ENCODE measurements at regions of chr20 and their contacts with region 1.

Region 1: DNA sequence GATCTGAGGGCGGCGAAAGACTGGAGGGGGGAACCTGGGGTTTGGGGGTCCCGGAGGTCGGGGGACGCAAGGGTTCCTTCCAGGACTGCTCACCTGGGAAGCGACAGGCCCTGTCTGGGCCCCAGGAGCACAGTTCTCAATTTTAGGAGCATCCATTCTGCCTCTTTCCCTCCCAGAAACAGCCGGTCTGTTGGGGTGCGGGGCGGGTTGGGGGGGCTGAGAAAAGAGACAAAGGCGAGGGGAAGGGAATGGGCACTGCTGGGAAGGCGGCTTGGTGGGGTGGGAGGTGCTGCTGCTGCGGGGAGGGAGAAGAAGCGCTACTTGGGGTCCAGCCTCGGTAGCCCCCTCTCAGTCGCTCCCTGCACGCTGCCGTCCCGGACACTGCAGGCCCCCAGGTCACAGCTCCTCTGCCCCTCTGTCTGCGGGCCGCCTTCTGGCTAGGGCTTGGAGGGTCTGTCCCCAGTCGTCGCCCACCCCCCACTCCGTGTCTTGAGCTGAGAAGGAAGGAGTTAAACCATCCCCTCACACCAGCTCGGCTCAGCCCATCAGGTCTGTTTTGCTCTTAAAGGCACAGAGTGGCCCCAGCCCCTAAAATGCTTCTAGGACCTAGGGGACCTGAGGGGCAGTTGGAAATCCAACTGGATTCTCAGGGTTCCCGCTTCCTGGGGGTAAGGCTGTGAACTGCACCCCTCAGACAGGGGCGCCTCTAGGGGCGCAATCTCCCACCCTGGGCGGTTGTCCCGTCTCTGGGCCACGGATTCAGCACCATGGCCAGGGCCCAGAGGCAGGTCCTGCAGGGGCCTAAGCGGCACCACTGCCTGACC is 690 bp downstream of the GDAP1L1 start:
- DNase-seq: peak; percentile 63 to 96
- H3K4me3 ChIP-seq: peak overlapping the region; percentile 77 to 93 (median 84)
- H3K27ac ChIP-seq: no peak overlapping the region
- H3K4me1 ChIP-seq: peaks cover 0 to 5% (median 0%) of the 10 kb centered on the region in 4 experiments; a peak in 4 of 7 replicates
- H3K27me3 ChIP-seq: no peaks in the 10 kb centered on the region
- CTCF ChIP-seq: peak; percentile 85 to 99 (median 97)
- EP300 ChIP-seq: peak in 1 of 2 experiments; percentile 18; a peak in 1 of 3 replicates
- POLR2A ChIP-seq: no peak
- RAD21 ChIP-seq: peak; percentile 49 to 61

Region 2: DNA sequence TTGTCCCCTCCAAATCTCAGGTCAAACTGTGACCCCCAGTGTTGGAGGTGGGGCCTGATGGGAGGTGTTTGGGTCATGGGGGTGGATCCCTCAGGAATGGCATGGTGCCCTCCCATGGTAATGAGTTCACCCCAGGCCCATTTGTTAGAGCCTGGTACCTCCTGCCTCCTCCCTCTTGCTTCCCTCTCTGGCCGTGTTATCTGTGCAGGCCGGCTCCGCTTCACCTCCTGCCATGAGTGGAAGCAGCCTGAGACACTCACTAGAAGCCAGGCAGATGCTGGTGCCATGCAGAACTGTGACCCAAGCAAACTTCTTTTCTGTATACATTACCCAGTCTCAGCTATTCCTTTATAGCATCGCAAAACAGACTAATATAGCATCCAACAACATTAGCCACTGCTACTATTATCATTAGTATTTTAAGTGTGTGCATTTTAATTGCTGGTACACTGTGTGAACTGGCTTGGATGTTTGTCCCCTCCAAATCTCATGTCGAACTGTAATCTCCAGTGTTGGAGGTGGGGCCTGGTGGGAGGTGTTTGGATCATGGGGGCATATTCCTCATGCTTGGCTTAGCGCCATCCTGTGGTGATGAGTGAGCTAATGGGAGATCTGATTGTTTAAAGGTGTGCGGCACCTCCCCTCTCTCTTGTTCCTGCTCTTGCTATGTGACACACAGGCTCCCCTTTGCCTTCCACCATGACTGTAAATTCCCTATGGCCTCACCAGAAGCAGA is 25.0 kb before region 1 on chr20:
- CTCF ChIA-PET with region 1: interaction called, 25 read pairs
- POLR2A ChIA-PET with region 1: no interaction called
- DNase-seq: no peak
- H3K4me3 ChIP-seq: no peak overlapping the region
- H3K27ac ChIP-seq: no peak overlapping the region
- H3K4me1 ChIP-seq: peaks cover 0 to 3% (median under 1%) of the 10 kb centered on the region in 4 experiments; a peak in 1 of 7 replicates
- H3K27me3 ChIP-seq: no peaks in the 10 kb centered on the region
- CTCF ChIP-seq: peak; percentile 52 to 78 (median 54)
- EP300 ChIP-seq: no peak
- POLR2A ChIP-seq: no peak
- RAD21 ChIP-seq: peak; percentile 13 to 41; a peak in 3 of 4 replicates

Region 3: GRCh38 chr20:44231713-44232468 is 15.9 kb before region 1 on chr20:
- CTCF ChIA-PET with region 1: interaction called, 11 read pairs
- POLR2A ChIA-PET with region 1: interaction called, 9 read pairs
- DNase-seq: no peak
- H3K4me3 ChIP-seq: no peak overlapping the region
- H3K27ac ChIP-seq: no peak overlapping the region
- H3K4me1 ChIP-seq: peaks cover 0 to 6% (median 0%) of the 10 kb centered on the region in 4 experiments; a peak in 4 of 7 replicates
- H3K27me3 ChIP-seq: no peaks in the 10 kb centered on the region
- CTCF ChIP-seq: no peak
- EP300 ChIP-seq: no peak
- POLR2A ChIP-seq: no peak
- RAD21 ChIP-seq: no peak

Region 4: GRCh38 chr20:44264287-44264686 is 16.5 kb after region 1 on chr20:
- CTCF ChIA-PET with region 1: interaction called, 31 read pairs
- POLR2A ChIA-PET with region 1: interaction called, 3 read pairs
- DNase-seq: no peak
- H3K4me3 ChIP-seq: no peak overlapping the region
- H3K27ac ChIP-seq: no peak overlapping the region
- H3K4me1 ChIP-seq: no peaks in the 10 kb centered on the region; a peak in 1 of 7 replicates
- H3K27me3 ChIP-seq: no peaks in the 10 kb centered on the region
- CTCF ChIP-seq: no peak
- EP300 ChIP-seq: no peak
- POLR2A ChIP-seq: no peak
- RAD21 ChIP-seq: no peak

Region 5: DNA sequence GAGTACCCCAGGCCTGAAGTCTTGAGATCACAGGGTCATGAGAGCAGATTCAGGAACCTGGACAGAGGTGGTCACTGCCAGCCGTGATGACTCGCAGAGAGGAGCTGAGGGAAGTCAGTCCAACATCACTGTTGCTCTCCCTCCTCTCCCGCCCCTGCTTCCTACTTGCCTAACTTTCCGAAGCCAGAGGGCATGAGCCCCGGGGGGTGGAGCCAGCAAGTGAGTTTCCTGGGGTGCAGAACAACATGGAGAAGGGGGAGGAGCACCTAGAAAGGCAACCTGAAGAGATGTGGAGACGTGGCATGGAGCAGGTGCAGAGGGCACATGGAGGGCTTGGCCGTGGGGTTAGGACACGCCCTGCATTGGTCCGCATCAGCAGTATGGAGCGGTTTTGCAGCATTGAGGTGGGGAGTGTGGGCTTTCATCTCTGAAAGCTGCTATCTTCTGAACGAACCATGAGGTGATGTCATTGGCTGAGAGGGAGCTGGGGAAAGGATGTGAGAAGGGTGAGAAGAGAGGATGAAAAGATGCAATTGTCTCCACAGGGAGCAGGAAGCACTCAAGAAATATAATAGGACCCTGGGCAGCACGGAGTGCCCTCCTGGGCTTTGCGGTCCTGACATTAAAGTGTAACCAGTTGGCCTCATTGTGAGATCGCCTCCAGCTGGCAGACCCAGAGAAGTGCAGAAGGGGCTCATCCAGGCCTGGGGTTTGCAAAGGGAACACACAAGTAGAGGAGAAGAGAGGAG is 24.3 kb after region 1 on chr20:
- CTCF ChIA-PET with region 1: interaction called, 24 read pairs
- POLR2A ChIA-PET with region 1: no interaction called
- DNase-seq: peak; percentile 27 to 79
- H3K4me3 ChIP-seq: peak overlapping the region in 1 of 4 experiments; percentile 23; a peak in 2 of 8 replicates
- H3K27ac ChIP-seq: no peak overlapping the region
- H3K4me1 ChIP-seq: peaks cover 0 to 8% (median 5%) of the 10 kb centered on the region in 4 experiments; a peak in 6 of 7 replicates
- H3K27me3 ChIP-seq: no peaks in the 10 kb centered on the region
- CTCF ChIP-seq: peak; percentile 70 to 93 (median 84)
- EP300 ChIP-seq: no peak
- POLR2A ChIP-seq: no peak
- RAD21 ChIP-seq: peak; percentile 46 to 59

Region 6: DNA sequence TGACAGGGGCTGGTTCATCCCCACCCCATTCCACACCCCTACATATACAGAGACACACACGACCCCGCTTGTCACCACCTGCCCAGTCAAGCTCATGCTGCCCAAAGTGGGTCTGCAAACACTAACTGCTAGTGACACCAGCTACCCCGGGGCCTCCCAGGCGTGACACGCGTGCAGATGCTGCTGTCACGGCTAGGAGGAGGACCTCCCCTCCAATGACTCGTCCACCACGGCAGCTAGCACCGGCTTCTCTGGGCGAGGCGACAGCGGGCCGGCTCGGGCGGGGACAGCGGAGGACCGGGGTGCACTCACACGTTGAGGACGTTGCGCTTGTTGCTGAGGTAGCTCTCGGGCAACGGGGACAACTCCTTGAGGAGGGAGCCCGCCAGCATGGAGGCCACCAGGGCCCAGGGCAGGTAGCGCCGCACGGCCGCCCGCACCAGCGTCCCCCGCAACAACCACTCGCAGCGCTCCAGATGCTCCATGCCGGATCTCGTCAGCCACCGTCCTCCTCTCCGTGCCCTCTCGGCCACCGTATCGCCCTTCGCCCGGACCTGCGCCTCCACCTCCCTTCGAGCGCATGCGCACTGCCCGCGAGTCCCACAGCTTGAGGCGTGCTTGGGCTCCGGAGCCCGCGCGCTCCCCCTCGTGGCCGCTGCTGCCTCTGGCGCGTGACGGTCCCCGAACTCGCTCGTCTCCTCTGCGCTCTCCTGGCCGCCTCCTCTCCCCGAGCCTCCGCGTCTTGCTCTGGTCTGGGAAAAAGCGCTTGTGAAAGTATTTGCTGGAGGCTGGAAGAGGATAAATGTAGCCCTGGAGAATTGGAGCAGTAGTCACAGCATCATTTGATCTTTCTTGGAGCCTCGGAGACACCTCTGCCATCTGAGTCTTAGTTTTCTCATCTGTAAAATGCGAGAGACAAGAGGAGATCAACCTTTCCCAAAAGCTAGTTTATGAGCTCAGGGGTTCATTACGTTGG is 63.2 kb after region 1 on chr20 and contains the start of gene FITM2:
- CTCF ChIA-PET with region 1: interaction called, 12 read pairs
- POLR2A ChIA-PET with region 1: no interaction called
- DNase-seq: peak; percentile 93 to 99
- H3K4me3 ChIP-seq: peak within 1 kb of the TSS; percentile 57 to 79 (median 76)
- H3K27ac ChIP-seq: no peak within 1 kb of the TSS
- H3K4me1 ChIP-seq: peaks cover 0 to 5% (median 2%) of the 10 kb centered on the region in 4 experiments; a peak in 2 of 7 replicates
- H3K27me3 ChIP-seq: peaks cover 0 to 18% (median 8%) of the 10 kb centered on the region in 4 experiments; a peak in 4 of 7 replicates
- CTCF ChIP-seq: peak; percentile 90 to 93 (median 92)
- EP300 ChIP-seq: no peak
- POLR2A ChIP-seq: 0 out of 3 replicates have a peak, but pooled peaks of 1 of the 2 experiments have one; percentile 31
- RAD21 ChIP-seq: peak; percentile 73 to 77
- total RNA-seq, gene FITM2: 2.0 and 2.1 TPM in 2 replicates